CD4-positive, alpha-beta memory T cell (primary cell): ENCODE measurements at regions of chr10 and their contacts with region 1.

Region 1: GRCh38 chr10:80055760-80056159 is 22.7 kb upstream of the TMEM254 start:
- DNase-seq: no peak
- H3K4me3 ChIP-seq: no peak overlapping the region
- H3K4me3 Mint-ChIP-seq: no peak overlapping the region
- H3K27ac ChIP-seq: no peak overlapping the region
- H3K27ac Mint-ChIP-seq: peak overlapping the region in 1 of 7 donors; percentile 17
- H3K4me1 ChIP-seq: no peaks in the 10 kb centered on the region
- H3K4me1 Mint-ChIP-seq: peaks cover 0 to 10% (median 5%) of the 10 kb centered on the region in 4 donors
- H3K27me3 ChIP-seq: no peaks in the 10 kb centered on the region
- H3K27me3 Mint-ChIP-seq: peaks cover 0 to under 1% of the 10 kb centered on the region in 2 donors

Region 2: DNA sequence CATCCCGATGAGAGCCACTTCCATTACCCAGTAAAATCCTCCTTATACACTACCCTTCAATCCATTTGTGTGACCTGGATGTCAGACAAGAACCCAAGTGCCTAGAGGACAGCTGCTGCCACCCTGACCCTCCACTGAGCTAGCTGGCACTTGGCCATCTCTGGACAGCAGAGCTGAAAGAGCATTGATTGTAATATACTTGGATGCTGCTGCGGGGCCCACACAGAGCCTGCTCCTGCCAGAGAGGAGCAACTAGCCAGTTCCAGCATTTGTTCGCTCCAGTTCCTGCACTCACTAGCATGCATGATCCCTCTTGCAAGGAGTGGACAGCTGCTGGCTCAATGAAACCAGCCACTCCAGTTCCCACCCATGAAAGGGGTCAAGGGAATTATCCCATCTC is 14.3 kb after region 1 on chr10:
- CTCF ChIA-PET with region 1: interaction called, 26 read pairs
- POLR2A ChIA-PET with region 1: interaction called, 3 read pairs
- intact Hi-C with region 1: no loop called
- DNase-seq: no peak
- H3K4me3 ChIP-seq: no peak overlapping the region
- H3K4me3 Mint-ChIP-seq: no peak overlapping the region
- H3K27ac ChIP-seq: no peak overlapping the region
- H3K27ac Mint-ChIP-seq: no peak overlapping the region
- H3K4me1 ChIP-seq: no peaks in the 10 kb centered on the region
- H3K4me1 Mint-ChIP-seq: no peaks in the 10 kb centered on the region
- H3K27me3 ChIP-seq: no peaks in the 10 kb centered on the region
- H3K27me3 Mint-ChIP-seq: no peaks in the 10 kb centered on the region

Region 3: GRCh38 chr10:80090121-80090520 is 34.4 kb after region 1 on chr10:
- CTCF ChIA-PET with region 1: no interaction called
- POLR2A ChIA-PET with region 1: no interaction called
- intact Hi-C with region 1: no loop called
- DNase-seq: no peak
- H3K4me3 ChIP-seq: no peak overlapping the region
- H3K4me3 Mint-ChIP-seq: no peak overlapping the region
- H3K27ac ChIP-seq: no peak overlapping the region
- H3K27ac Mint-ChIP-seq: no peak overlapping the region
- H3K4me1 ChIP-seq: no peaks in the 10 kb centered on the region
- H3K4me1 Mint-ChIP-seq: no peaks in the 10 kb centered on the region
- H3K27me3 ChIP-seq: no peaks in the 10 kb centered on the region
- H3K27me3 Mint-ChIP-seq: no peaks in the 10 kb centered on the region